ENCODE measurements at regions of chr2 and their contacts with region 1.

Region 1: GRCh38 chr2:27191053-27191829 is 20.6 kb upstream of the ATRAID start:
- DNase-seq: peak; percentile 71
- ATAC-seq: peak; percentile 99
- H3K4me3 ChIP-seq: no peak overlapping the region
- H3K27ac ChIP-seq: no peak overlapping the region
- H3K4me1 ChIP-seq: peaks cover 2% of the 10 kb centered on the region; the same call in 1 of the 2 replicates
- H3K27me3 ChIP-seq: peaks cover 18% of the 10 kb centered on the region
- CTCF ChIP-seq: peak; percentile 83
- POLR2A ChIP-seq: no peak
- RAD21 ChIP-seq: peak; percentile 84

Region 2: DNA sequence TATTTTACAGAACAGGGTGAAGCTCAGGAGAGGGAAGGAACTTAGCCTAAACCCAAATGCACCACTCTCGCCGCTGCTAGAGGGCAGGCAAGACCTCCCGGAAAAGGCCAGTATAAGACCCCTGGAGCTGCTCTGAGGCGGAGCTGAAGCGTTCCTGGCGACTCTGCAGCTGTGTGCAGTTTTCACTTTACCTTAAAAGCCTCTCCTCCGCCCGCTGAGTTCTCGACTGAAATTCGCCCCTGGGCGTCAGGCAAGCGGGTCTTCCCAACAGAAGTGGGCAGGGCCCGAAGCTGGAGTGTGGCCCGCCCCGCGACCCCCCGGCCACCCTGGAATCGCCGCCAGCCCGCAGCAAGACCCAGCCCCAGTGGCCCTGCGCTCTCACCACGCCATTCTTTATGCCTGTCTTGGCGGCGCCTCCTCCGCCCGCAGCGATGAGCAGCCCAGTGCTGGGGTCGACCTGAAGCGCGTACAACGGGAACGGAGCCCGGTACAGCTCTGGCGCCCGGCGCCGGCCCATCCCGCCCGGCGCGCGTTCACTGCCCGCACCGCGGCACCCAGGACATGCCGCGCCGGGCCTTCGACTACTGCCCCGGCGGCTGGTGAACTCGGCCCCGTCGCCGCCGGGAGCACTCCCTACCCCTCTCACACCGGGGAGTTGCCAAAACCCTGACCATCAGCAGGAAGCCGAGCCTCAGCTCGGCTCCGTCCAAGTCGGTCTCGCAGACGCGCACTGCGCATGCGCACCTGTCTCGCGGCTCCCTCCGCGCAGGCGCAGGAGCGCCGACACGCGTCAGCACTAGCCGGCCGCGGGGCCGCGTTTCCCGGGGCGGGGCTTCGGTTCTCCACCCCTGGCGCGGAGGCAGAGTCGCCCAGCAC is 57.1 kb before region 1 on chr2 and contains the start of gene PREB:
- CTCF ChIA-PET with region 1: interaction called, 6 read pairs
- POLR2A ChIA-PET with region 1: no interaction called
- dilution Hi-C with region 1: no loop called
- in situ Hi-C with region 1: no loop called
- intact Hi-C with region 1: loop called (anchors 2 kb)
- DNase-seq: peak; percentile 92
- ATAC-seq: peak; percentile 99
- H3K4me3 ChIP-seq: peak within 1 kb of the TSS; percentile 79
- H3K27ac ChIP-seq: peak within 1 kb of the TSS; percentile 71
- H3K4me1 ChIP-seq: peaks cover 9% of the 10 kb centered on the region
- H3K27me3 ChIP-seq: peaks cover 11% of the 10 kb centered on the region; the same call in 1 of the 2 replicates
- CTCF ChIP-seq: peak; percentile 48
- POLR2A ChIP-seq: peak; percentile 47; the same call in 1 of the 2 replicates
- RAD21 ChIP-seq: peak; percentile 58
- total RNA-seq, gene PREB: 36.1 and 38.9 TPM in 2 replicates

Region 3: DNA sequence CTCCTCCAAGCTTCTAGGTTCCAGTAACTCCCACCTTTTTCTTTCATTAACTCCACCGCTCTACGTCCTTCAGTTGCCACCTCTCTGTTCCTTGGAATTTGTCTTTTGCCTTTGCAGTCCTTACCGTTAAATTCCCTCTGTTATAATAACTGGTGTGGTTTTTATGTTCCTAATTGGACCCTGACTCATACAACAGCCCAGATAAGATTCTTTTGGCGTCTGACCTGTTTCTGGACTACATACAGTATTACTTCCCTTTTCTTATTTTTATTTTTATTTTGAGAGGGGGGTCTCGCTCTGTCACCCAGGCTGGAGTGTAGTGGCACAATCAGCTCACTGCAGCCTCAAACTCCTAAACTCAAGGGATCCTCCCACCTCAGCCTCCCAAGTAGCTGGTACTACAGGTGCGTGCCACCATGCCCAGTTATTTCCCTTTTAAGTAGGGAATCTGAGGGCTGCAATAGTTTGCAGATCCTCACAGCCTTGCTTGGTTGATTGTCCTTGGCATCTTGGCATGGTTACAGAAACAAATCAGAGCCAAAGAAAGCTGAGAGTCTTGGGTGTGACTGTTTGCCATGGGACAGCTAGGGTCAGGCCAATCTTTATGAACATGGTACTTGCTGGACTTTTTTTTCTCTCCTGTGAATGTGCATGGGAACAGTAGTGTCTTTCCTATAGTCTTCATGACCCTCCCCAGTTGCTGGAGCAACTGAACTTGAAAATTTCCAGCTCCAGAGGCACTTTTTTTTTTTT is 20.5 kb before region 1 on chr2:
- CTCF ChIA-PET with region 1: interaction called, 7 read pairs
- POLR2A ChIA-PET with region 1: no interaction called
- dilution Hi-C with region 1: no loop called
- in situ Hi-C with region 1: no loop called
- intact Hi-C with region 1: loop called (anchors 1 kb)
- DNase-seq: no peak
- ATAC-seq: no peak
- H3K4me3 ChIP-seq: no peak overlapping the region
- H3K27ac ChIP-seq: no peak overlapping the region
- H3K4me1 ChIP-seq: no peaks in the 10 kb centered on the region
- H3K27me3 ChIP-seq: peaks cover 67% of the 10 kb centered on the region
- CTCF ChIP-seq: no peak
- POLR2A ChIP-seq: no peak
- RAD21 ChIP-seq: no peak

Region 4: GRCh38 chr2:27400348-27401135 is 209.3 kb after region 1 on chr2:
- CTCF ChIA-PET with region 1: no interaction called
- POLR2A ChIA-PET with region 1: no interaction called
- dilution Hi-C with region 1: no loop called
- in situ Hi-C with region 1: no loop called
- intact Hi-C with region 1: no loop called
- DNase-seq: no peak
- ATAC-seq: peak; percentile 21; the same call in 1 of the 2 replicates
- H3K4me3 ChIP-seq: no peak overlapping the region
- H3K27ac ChIP-seq: no peak overlapping the region
- H3K4me1 ChIP-seq: no peaks in the 10 kb centered on the region
- H3K27me3 ChIP-seq: no peaks in the 10 kb centered on the region
- CTCF ChIP-seq: no peak
- POLR2A ChIP-seq: no peak
- RAD21 ChIP-seq: no peak

Region 5: DNA sequence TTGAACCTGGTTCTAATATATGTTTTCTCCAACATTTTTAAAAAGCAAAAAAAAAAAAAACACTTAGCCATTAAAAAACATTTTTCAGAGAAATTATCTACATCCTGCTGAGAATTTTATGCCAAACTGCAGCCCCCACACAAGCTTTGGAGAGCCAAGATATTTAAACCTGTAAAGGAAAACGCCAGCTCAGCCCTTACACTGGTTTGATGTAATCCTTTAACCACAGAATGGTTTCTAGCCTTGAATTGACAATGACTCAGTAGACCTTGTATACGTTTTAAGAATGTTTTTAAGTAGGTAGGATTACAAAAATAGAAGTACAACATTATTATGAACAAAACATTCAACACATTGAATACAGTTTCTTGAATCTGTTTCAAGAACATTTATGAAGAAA is 812.8 kb after region 1 on chr2:
- CTCF ChIA-PET with region 1: no interaction called
- POLR2A ChIA-PET with region 1: no interaction called
- dilution Hi-C with region 1: no loop called
- in situ Hi-C with region 1: no loop called
- intact Hi-C with region 1: no loop called
- DNase-seq: peak; percentile 96
- ATAC-seq: peak; percentile 85
- H3K4me3 ChIP-seq: no peak overlapping the region
- H3K27ac ChIP-seq: no peak overlapping the region
- H3K4me1 ChIP-seq: peaks cover 4% of the 10 kb centered on the region
- H3K27me3 ChIP-seq: no peaks in the 10 kb centered on the region
- CTCF ChIP-seq: no peak
- POLR2A ChIP-seq: no peak
- RAD21 ChIP-seq: no peak

Measured in IMR-90 (cell line).